ENCODE measurements at regions of chr22 and their contacts with region 1.

Region 1: GRCh38 chr22:32474635-32475467 is at the start of gene FBXO7:
- DNase-seq: peak; percentile 96 to 97
- ATAC-seq: peak; percentile 93 to 96 (median 96)
- H3K4me3 ChIP-seq: peak within 1 kb of the TSS; percentile 97
- H3K27ac ChIP-seq: peak within 1 kb of the TSS; percentile 99
- H3K4me1 ChIP-seq: peaks cover 30% of the 10 kb centered on the region
- H3K27me3 ChIP-seq: no peaks in the 10 kb centered on the region
- CTCF ChIP-seq: peak; percentile 13
- total RNA-seq, gene FBXO7: 28.2 to 34.4 (median 28.6) TPM

Region 2: DNA sequence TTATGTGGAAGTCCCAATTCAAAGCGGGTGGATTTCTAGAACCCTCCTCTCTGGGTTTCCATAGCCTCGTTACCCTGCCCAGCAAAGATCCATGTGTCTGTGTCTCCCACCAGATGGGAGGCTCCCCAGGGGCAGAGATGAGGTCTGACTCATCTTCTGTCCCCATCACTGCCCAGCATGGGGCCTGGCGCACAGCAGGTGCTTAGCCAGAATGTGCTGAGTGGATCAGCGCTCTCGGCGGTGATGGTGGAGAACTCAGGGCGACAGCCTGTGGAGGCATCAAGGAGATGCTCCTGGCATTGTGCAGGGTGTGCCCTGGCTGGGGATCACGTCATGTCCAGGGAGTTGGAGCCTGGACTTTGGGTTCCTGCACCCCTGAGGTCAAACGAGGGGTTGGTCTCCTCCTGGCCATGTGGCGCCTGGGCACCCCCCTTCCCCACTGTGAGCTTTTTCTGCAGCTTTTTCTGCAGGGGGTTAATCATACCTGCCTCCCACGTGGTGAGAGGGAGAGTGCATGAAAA is 163.2 kb before region 1 on chr22:
- intact Hi-C with region 1: no loop called
- DNase-seq: no peak
- ATAC-seq: no peak
- H3K4me3 ChIP-seq: no peak overlapping the region
- H3K27ac ChIP-seq: no peak overlapping the region
- H3K4me1 ChIP-seq: no peaks in the 10 kb centered on the region
- H3K27me3 ChIP-seq: peaks cover 0 to 11% (median 2%) of the 10 kb centered on the region in 3 donors
- CTCF ChIP-seq: no peak

Region 3: DNA sequence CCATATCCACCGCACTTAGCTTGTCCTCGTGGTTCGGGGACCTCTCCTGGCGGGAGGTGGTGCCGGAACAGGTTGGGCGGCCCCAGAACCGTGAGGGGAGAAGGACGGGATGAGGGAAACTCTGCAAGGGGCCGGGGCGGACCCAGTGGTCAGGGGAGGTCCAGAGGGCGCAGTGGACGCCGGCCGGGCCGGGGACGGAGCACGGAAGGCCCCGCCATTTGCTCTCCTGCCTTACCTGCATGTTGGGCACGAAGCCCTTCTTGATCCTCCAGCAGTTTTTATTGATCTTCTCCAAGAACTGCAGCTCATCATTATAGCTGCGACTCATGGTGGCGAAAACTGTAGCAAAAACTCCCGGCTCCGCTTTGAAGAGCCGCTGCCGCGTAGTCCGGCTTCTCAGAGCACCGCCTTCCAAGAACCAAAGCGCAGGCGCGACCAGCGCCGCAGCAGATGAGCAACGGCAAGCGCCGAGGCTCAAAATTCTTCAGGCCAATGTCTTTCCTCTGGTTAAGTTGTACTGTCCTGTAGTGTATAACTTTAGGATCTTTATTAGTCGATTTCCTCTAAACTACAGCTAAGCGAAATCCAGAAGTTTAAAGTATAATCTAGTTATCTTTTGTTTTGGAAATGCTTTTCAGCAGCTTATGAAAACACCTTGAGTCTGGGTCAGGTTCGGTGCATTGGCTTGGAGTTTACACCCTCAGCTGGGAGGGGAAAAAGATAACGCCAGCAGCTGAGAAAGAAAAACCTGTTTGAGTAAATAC is 62.8 kb before region 1 on chr22 and contains the start of gene RTCB:
- intact Hi-C with region 1: loop called (anchors 2 to 5 kb)
- DNase-seq: peak; percentile 94 to 97
- ATAC-seq: peak; percentile 87 to 98 (median 93)
- H3K4me3 ChIP-seq: peak within 1 kb of the TSS; percentile 84
- H3K27ac ChIP-seq: peak within 1 kb of the TSS; percentile 79
- H3K4me1 ChIP-seq: peaks cover 18% of the 10 kb centered on the region
- H3K27me3 ChIP-seq: no peaks in the 10 kb centered on the region
- CTCF ChIP-seq: no peak
- total RNA-seq, gene RTCB: 40.3 to 59.5 (median 47.5) TPM